PC-9 (cell line): ENCODE measurements at regions of chr13 and their contacts with region 1.

Region 1: GRCh38 chr13:97849305-97849704 is 104.2 kb upstream of the IPO5 start:
- DNase-seq: peak; percentile 19 to 46
- H3K4me3 ChIP-seq: no peak overlapping the region
- H3K27ac ChIP-seq: no peak overlapping the region
- H3K4me1 ChIP-seq: peaks cover 9% of the 10 kb centered on the region; the same call in 1 of the 2 replicates
- H3K27me3 ChIP-seq: no peaks in the 10 kb centered on the region
- CTCF ChIP-seq: peak; percentile 71

Region 2: GRCh38 chr13:98598043-98598442 is 748.7 kb after region 1 on chr13:
- CTCF ChIA-PET with region 1: no interaction called
- POLR2A ChIA-PET with region 1: no interaction called
- intact Hi-C with region 1: no loop called
- DNase-seq: no peak
- H3K4me3 ChIP-seq: no peak overlapping the region
- H3K27ac ChIP-seq: no peak overlapping the region
- H3K4me1 ChIP-seq: 0 out of 2 replicates have a peak, but pooled peaks cover 4% of the 10 kb centered on the region
- H3K27me3 ChIP-seq: no peaks in the 10 kb centered on the region
- CTCF ChIP-seq: no peak

Region 3: DNA sequence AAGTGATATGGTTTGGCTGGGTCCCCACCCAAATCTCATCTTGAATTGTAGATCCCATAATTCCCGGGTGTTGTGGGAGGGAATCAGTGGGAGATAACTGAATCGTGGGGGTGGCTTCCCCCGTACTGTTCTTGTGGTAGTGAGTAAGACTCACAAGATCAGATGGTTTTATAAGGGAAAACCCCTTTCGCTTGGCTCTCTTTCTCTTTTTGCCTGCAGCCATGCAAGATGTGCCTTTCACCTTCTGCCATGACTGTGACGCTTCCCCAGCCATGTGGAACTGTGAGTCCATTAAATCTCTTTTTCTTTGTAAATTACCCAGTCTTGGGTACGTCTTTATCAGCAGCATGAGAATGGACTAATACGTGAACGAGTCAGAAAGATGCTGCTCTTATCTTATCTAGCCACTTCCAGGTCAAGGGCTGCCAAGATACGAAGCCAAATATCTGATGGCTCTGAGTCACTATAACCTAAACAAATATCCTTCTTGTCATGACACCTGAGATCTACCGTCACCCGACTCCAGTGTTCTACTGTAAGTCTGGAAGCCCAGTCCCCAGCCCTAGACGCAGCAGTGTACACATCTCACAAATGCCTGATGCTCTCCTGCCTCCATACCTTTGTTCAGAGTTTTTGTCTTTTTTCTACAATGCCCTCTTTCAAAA is 857.3 kb after region 1 on chr13:
- CTCF ChIA-PET with region 1: interaction called, 13 read pairs
- POLR2A ChIA-PET with region 1: no interaction called
- intact Hi-C with region 1: no loop called
- DNase-seq: peak; percentile 21 to 88
- H3K4me3 ChIP-seq: no peak overlapping the region
- H3K27ac ChIP-seq: no peak overlapping the region
- H3K4me1 ChIP-seq: peaks cover 16% of the 10 kb centered on the region
- H3K27me3 ChIP-seq: no peaks in the 10 kb centered on the region
- CTCF ChIP-seq: no peak

Region 4: DNA sequence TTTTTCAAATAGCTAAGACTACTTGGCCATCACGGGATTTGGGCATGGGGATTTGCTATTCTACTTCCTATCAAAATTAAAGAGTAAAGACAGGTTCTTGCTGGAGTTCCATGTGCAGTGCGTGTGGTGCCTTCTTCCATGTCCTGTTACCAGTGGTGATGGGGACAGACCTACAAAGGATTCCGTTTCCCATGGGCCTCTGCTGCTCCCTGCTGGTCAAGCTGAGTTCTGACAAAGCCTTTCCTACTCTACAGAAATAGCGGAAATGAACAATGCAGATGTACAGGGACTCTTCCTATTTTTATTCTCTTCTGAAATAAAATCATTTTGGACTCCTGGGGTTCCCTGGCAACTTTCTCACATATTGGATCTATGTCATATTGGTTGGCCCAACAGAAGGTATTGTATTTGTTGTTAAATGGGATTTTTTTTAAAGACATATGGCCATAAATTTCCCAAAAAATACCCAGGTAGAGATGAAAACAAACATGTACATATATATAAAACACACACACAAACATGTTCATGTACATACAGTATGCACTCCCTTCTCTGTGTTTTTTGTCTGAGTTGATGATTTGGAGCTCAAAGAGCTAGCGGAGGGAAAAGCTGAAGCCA is 993.7 kb after region 1 on chr13:
- CTCF ChIA-PET with region 1: no interaction called
- POLR2A ChIA-PET with region 1: no interaction called
- intact Hi-C with region 1: loop called (anchors 2 kb)
- DNase-seq: peak; percentile 59 to 62
- H3K4me3 ChIP-seq: no peak overlapping the region
- H3K27ac ChIP-seq: no peak overlapping the region
- H3K4me1 ChIP-seq: no peaks in the 10 kb centered on the region
- H3K27me3 ChIP-seq: no peaks in the 10 kb centered on the region
- CTCF ChIP-seq: peak; percentile 93

Region 5: DNA sequence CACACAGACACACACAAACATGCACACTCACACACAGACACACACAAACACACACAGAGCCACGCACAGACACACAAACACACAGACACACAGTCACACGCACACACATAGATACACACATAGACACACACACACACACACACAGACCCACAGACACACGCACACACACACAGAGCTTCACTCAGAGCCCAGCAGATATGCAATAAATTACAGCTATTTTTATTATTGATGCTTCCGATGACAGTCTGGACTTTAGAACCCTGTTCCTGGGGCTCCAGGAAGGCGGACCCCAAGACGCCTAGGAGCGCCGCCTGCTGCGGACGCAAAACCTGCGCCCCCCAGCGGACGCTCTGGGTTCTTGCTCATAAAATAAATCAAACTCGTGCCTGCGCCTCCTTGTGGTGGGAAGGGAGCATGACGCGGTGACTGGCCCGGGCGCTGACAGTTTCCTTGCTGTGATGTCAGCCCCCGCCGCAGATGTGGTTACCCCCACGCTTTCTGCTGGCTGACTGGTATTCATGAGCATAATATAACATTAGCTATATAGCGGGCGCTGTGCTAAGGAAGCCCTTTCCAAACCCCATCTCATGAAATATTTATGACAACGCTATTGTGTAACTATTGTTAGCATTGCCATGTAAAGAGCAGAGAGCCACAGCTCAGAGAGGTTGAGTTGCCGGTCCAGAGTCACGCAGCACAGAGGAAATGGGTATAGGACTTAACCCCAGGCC is 1587.5 kb after region 1 on chr13:
- CTCF ChIA-PET with region 1: no interaction called
- POLR2A ChIA-PET with region 1: no interaction called
- intact Hi-C with region 1: loop called (anchors 5 kb)
- DNase-seq: peak; percentile 73 to 75
- H3K4me3 ChIP-seq: no peak overlapping the region; the same call in 1 of the 2 replicates
- H3K27ac ChIP-seq: no peak overlapping the region
- H3K4me1 ChIP-seq: peaks cover 43% of the 10 kb centered on the region
- H3K27me3 ChIP-seq: no peaks in the 10 kb centered on the region
- CTCF ChIP-seq: peak; percentile 100